Sciatic nerve (tissue), 2 donors: ENCODE measurements at regions of chr19 and their contacts with region 1.

Region 1: DNA sequence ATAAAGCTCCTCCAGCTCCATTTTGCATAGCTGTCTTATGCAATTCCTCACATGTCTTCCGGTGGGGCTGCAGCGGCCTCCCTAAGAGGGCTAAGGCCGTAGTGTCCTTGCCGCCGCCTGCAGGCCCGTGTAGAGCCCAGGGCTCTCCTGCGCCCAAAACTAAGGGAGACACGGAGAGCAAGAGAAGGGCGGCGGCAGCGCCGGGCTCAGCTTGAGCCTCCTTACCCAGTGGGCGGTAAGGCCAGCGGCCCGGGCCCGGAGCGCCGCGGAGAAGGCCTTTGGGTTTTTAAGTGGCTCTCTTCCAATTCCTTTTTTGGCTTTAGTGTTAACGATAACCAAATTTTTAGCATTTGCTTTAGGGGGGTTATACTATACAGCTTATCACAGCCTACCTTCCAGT is 30.1 kb downstream of the ZNF677 start:
- DNase-seq: no peak
- ATAC-seq: no peak

Region 2: DNA sequence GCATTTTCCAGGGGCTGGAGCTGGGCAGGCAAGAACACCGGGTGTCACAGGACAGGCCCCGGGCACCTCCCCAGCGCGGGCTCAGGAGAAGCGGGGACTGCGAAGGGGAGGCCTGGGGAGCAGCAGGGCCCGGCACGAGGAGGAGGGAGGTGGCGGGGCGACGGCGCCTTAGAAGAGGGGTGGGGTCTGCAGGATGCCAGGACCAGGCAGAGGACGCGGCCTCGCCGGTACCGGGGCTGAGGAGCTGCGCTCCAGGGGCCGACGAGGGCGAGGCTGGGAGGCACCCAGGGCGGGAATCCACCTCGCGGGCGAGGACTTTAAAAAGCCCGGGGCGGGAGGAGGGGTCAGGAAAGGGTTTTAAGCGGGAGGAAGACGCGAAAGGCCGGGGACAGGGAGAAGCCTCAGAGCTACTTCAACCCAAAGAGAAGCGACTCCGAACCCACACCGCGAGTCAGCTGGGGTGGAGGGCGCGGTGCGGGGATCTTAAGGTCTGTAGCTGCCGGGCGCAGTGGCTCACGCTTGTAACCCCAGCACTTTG is 66.4 kb before region 1 on chr19:
- intact Hi-C with region 1: no loop called
- DNase-seq: peak; percentile 61
- ATAC-seq: peak; percentile 52

Region 3: GRCh38 chr19:53246498-53246897 is 21.9 kb after region 1 on chr19:
- intact Hi-C with region 1: loop called (anchors 1 kb)
- DNase-seq: no peak
- ATAC-seq: no peak

Region 4: GRCh38 chr19:53271955-53272443 is 47.4 kb after region 1 on chr19:
- intact Hi-C with region 1: no loop called
- DNase-seq: no peak
- ATAC-seq: no peak